Activated CD4-positive, alpha-beta T cell treated with anti-CD3 and anti-CD28 coated beads for 36 hours (primary cell): ENCODE measurements at regions of chr12 and their contacts with region 1.

Region 1: GRCh38 chr12:54579696-54580333 is 8.6 kb downstream of the PPP1R1A start:
- DNase-seq: peak; percentile 92
- ATAC-seq: peak; percentile 97
- H3K4me3 Mint-ChIP-seq: no peak overlapping the region
- H3K27ac Mint-ChIP-seq: no peak overlapping the region
- H3K4me1 Mint-ChIP-seq: no peaks in the 10 kb centered on the region
- H3K27me3 Mint-ChIP-seq: peaks cover 3% of the 10 kb centered on the region

Region 2: GRCh38 chr12:54560374-54560858 is 19.4 kb before region 1 on chr12:
- CTCF ChIA-PET with region 1: interaction called, 18 read pairs
- POLR2A ChIA-PET with region 1: no interaction called
- intact Hi-C with region 1: no loop called
- DNase-seq: peak; percentile 95
- ATAC-seq: peak; percentile 100
- H3K4me3 Mint-ChIP-seq: peak overlapping the region; percentile 66
- H3K27ac Mint-ChIP-seq: peak overlapping the region; percentile 93
- H3K4me1 Mint-ChIP-seq: peaks cover 33% of the 10 kb centered on the region
- H3K27me3 Mint-ChIP-seq: no peaks in the 10 kb centered on the region

Region 3: DNA sequence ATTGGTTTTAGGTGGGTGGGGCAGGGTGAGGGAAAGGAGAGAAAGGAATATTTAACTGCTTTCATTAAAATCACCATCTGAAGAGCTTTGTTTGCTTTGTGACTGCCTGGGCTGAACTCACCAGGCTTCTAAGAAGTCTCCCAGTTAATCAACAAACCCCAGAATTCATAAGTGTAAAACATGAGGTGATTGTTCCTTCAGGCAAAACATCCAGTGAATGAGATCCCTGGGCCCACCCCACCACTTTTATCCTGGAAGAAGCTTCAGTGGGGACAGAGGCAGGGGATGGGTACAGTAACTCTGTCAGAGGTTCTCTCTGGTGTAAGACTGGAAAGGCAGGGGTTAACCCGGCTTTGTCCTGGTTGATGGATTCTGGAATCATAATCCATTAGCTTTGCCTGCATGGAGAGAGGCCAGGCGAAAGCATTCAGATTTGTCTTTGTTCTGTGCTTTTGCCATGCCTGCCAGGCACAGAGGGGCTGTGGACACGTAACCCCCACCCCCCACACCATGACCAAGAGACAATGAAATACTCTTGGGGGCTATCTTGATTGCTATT is 13.8 kb before region 1 on chr12:
- CTCF ChIA-PET with region 1: interaction called, 18 read pairs
- POLR2A ChIA-PET with region 1: no interaction called
- intact Hi-C with region 1: no loop called
- DNase-seq: no peak
- ATAC-seq: no peak
- H3K4me3 Mint-ChIP-seq: no peak overlapping the region
- H3K27ac Mint-ChIP-seq: no peak overlapping the region
- H3K4me1 Mint-ChIP-seq: peaks cover 16% of the 10 kb centered on the region
- H3K27me3 Mint-ChIP-seq: no peaks in the 10 kb centered on the region

Region 4: DNA sequence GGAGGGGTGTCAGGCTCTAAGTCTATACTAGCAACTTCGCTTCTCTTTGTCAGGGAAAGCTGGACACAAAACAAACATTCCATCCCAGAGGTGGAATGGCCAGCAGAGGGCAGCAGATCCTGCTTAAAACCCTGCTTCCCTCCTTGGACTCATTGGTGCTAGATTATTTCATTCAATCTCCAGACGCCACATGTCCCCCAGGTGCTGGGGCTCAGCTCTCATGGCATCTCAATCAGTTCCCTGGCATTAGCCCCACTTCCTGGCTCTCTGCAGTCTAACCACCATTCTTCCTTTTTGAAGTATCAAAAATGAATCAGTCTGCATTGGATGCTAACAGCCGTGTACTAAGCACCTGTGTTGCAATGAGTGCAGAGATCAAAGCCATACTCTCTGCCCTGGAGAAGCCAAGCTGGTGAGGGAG is 16.7 kb after region 1 on chr12:
- CTCF ChIA-PET with region 1: interaction called, 15 read pairs
- POLR2A ChIA-PET with region 1: no interaction called
- intact Hi-C with region 1: loop called in 1 of 2 experiments (anchors 2 kb)
- DNase-seq: peak; percentile 75
- ATAC-seq: peak; percentile 73
- H3K4me3 Mint-ChIP-seq: no peak overlapping the region
- H3K27ac Mint-ChIP-seq: no peak overlapping the region
- H3K4me1 Mint-ChIP-seq: peaks cover 3% of the 10 kb centered on the region
- H3K27me3 Mint-ChIP-seq: peaks cover 8% of the 10 kb centered on the region

Region 5: DNA sequence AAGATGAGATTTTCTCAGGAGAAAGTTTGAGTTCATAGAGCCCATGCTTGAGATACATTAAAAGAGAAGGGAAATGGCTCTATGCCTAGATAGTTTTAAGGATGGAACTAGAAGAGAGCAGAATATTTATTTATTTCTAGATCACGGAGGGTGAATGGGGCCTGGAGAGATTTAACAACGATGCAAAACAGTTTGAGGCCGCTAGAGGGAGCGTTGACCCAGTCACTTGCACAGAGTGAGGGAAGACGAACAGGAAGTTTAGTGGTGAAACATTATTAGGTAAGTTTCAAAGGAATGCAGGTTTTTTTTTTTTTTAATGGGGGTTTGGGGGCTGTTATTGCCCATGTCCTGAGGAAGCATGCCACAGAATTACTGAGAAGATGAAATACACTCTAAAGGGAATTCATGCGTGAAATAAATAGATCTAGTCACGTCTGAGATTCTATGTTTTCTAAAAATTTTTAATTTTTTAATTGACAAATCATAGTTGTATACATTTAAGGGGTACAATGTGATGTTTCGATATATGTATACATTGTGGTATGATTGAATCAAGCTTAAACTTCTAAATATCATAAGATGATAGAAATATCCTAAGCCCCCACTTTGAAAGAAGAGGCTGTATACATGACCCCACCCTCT is 23.5 kb after region 1 on chr12:
- CTCF ChIA-PET with region 1: interaction called, 15 read pairs
- POLR2A ChIA-PET with region 1: no interaction called
- intact Hi-C with region 1: no loop called
- DNase-seq: peak; percentile 78
- ATAC-seq: peak; percentile 93
- H3K4me3 Mint-ChIP-seq: no peak overlapping the region
- H3K27ac Mint-ChIP-seq: no peak overlapping the region
- H3K4me1 Mint-ChIP-seq: peaks cover 6% of the 10 kb centered on the region
- H3K27me3 Mint-ChIP-seq: peaks cover 13% of the 10 kb centered on the region

Region 6: GRCh38 chr12:54658306-54659264 is 78.8 kb after region 1 on chr12:
- CTCF ChIA-PET with region 1: interaction called, 10 read pairs
- POLR2A ChIA-PET with region 1: no interaction called
- intact Hi-C with region 1: no loop called
- DNase-seq: peak; percentile 73
- ATAC-seq: peak; percentile 78
- H3K4me3 Mint-ChIP-seq: no peak overlapping the region
- H3K27ac Mint-ChIP-seq: no peak overlapping the region
- H3K4me1 Mint-ChIP-seq: no peaks in the 10 kb centered on the region
- H3K27me3 Mint-ChIP-seq: peaks cover 16% of the 10 kb centered on the region

Region 7: DNA sequence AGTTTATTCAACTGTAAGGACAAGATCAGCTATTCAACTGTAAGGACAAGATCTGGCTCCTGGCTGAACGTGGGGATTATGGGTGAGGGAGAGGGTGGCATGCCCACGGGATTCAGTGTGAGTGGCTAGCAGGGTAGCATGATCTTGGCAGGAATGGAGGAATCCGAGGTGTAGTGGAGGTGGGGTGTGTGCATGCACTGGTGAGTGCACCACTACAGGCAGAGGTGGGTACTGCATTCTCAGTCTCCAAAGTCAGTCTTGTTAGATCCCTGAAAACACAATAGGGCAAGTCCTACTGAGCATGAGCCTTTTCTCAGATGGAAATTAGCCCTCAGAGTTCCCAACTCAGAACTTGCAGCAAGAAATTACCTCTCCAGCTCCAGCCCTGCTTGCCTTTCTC is 100.6 kb after region 1 on chr12:
- CTCF ChIA-PET with region 1: interaction called, 10 read pairs
- POLR2A ChIA-PET with region 1: no interaction called
- intact Hi-C with region 1: no loop called
- DNase-seq: peak; percentile 58
- ATAC-seq: peak; percentile 76
- H3K4me3 Mint-ChIP-seq: no peak overlapping the region
- H3K27ac Mint-ChIP-seq: no peak overlapping the region
- H3K4me1 Mint-ChIP-seq: no peaks in the 10 kb centered on the region
- H3K27me3 Mint-ChIP-seq: peaks cover 26% of the 10 kb centered on the region